PC-9 (cell line): ENCODE measurements at regions of chr10 and their contacts with region 1.

Region 1: GRCh38 chr10:22340362-22341189 is 4.7 kb upstream of the SPAG6 start:
- DNase-seq: peak in 1 of 2 experiments; percentile 72
- H3K4me3 ChIP-seq: peak overlapping the region; percentile 84
- H3K27ac ChIP-seq: peak overlapping the region; percentile 61
- H3K4me1 ChIP-seq: peaks cover 6% of the 10 kb centered on the region; the same call in 1 of the 2 replicates
- H3K27me3 ChIP-seq: no peaks in the 10 kb centered on the region
- CTCF ChIP-seq: no peak

Region 2: GRCh38 chr10:21912625-21913024 is 428.0 kb before region 1 on chr10:
- CTCF ChIA-PET with region 1: no interaction called
- POLR2A ChIA-PET with region 1: no interaction called
- intact Hi-C with region 1: no loop called
- DNase-seq: no peak
- H3K4me3 ChIP-seq: no peak overlapping the region
- H3K27ac ChIP-seq: no peak overlapping the region
- H3K4me1 ChIP-seq: no peaks in the 10 kb centered on the region
- H3K27me3 ChIP-seq: no peaks in the 10 kb centered on the region
- CTCF ChIP-seq: no peak

Region 3: GRCh38 chr10:22436884-22437619 is 96.5 kb after region 1 on chr10:
- CTCF ChIA-PET with region 1: interaction called, 11 read pairs
- POLR2A ChIA-PET with region 1: interaction called, 4 read pairs
- intact Hi-C with region 1: no loop called
- DNase-seq: peak; percentile 61 to 62
- H3K4me3 ChIP-seq: peak overlapping the region; percentile 82
- H3K27ac ChIP-seq: peak overlapping the region; percentile 48
- H3K4me1 ChIP-seq: peaks cover 37% of the 10 kb centered on the region
- H3K27me3 ChIP-seq: no peaks in the 10 kb centered on the region
- CTCF ChIP-seq: no peak

Region 4: DNA sequence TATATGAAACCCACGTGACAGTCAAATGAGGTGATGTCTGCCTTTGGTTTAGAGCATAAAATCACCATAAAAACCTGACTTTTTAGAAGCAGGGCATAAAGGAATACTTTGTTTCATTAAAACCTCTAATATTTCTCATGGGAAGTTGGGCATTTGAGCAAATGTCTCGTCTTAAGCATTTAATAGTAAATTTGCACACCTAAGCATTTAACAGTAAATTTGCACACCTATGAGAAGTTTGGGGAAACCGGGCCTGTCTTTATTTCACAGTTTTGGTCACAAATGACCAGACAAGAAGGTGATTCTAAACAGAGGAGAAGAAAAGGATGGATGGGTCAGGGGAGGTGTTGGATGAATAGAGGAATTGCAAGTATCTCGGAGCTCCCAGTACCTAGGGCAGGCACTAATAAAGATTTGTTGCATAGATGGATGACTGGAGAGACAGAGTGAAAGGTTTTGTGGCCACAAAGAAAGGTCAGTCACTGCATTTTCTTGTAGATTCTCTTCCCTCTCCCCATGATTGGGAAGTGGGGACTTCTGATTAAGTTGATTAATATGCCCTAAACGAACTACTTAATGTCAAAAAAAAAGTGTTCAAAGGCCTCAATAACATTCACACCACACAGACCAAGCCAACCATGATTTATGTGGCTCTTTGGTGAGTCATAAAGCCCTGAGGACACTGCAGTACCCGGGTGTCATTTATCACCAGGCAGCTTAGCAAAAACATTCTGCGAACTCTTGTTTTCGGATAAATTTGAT is 162.9 kb after region 1 on chr10:
- CTCF ChIA-PET with region 1: no interaction called
- POLR2A ChIA-PET with region 1: no interaction called
- intact Hi-C with region 1: loop called (anchors 5 kb)
- DNase-seq: peak; percentile 36 to 73
- H3K4me3 ChIP-seq: no peak overlapping the region
- H3K27ac ChIP-seq: no peak overlapping the region
- H3K4me1 ChIP-seq: peaks cover 12% of the 10 kb centered on the region
- H3K27me3 ChIP-seq: no peaks in the 10 kb centered on the region
- CTCF ChIP-seq: no peak